ENCODE measurements at regions of chr16 and their contacts with region 1.

Region 1: GRCh38 chr16:12067714-12068401 is 91.3 kb downstream of the SNX29 start:
- DNase-seq: peak; percentile 79
- ATAC-seq: peak; percentile 90
- H3K4me3 ChIP-seq: no peak overlapping the region
- H3K27ac ChIP-seq: no peak overlapping the region
- H3K4me1 ChIP-seq: no peaks in the 10 kb centered on the region
- H3K27me3 ChIP-seq: no peaks in the 10 kb centered on the region
- CTCF ChIP-seq: peak; percentile 93

Region 2: GRCh38 chr16:11949527-11949926 is 118.3 kb before region 1 on chr16:
- CTCF ChIA-PET with region 1: interaction called, 18 read pairs
- POLR2A ChIA-PET with region 1: no interaction called
- in situ Hi-C with region 1: no loop called
- intact Hi-C with region 1: loop called (anchors 5 kb)
- DNase-seq: peak; percentile 38
- ATAC-seq: peak; percentile 95
- H3K4me3 ChIP-seq: no peak overlapping the region
- H3K27ac ChIP-seq: no peak overlapping the region
- H3K4me1 ChIP-seq: 0 out of 2 replicates have a peak, but pooled peaks cover 3% of the 10 kb centered on the region
- H3K27me3 ChIP-seq: no peaks in the 10 kb centered on the region
- CTCF ChIP-seq: peak; percentile 79

Region 3: DNA sequence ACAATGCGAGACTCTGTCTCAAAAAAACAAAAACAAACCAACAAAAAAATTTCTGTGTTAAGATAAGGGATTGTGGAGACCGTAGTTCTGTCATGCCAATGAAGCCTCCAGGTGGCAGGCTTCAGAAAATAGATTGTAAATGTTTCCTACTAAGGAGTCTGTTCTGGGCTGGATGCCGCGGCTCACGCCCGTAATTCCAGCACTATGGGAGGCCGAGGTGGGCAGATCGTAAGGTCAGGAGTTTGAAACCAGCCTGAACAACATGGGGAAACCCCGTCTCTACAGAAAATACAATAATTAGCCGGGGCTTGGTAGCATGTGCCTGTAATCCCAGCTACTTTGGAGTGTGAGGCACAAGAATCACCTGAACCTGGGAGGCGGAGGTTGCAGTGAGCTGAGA is 95.7 kb before region 1 on chr16:
- CTCF ChIA-PET with region 1: interaction called, 5 read pairs
- POLR2A ChIA-PET with region 1: no interaction called
- in situ Hi-C with region 1: no loop called
- intact Hi-C with region 1: loop called (anchors 1 kb)
- DNase-seq: no peak
- ATAC-seq: no peak
- H3K4me3 ChIP-seq: no peak overlapping the region
- H3K27ac ChIP-seq: no peak overlapping the region
- H3K4me1 ChIP-seq: no peaks in the 10 kb centered on the region
- H3K27me3 ChIP-seq: no peaks in the 10 kb centered on the region
- CTCF ChIP-seq: no peak; the same call in 1 of the 2 replicates

Region 4: DNA sequence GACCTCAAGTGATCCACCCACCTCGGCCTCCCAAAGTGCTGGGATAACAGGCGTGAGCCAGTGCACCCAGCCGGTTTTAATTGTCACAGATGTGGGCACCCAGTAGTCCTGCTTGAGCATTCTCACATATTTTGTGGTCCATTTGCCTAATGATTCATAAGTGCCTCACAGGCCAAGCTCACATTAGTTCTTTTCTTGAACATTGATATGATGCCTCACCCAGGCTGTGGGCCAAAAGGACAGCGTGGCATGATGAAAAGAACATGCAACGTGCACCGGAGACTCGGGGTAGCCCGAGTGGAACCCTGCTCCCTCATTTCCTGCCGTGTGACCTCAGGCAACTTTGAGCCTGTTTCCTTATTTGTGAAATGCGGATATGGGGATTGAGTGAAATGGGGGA is 90.6 kb after region 1 on chr16:
- CTCF ChIA-PET with region 1: no interaction called
- POLR2A ChIA-PET with region 1: no interaction called
- in situ Hi-C with region 1: no loop called
- intact Hi-C with region 1: no loop called
- DNase-seq: no peak
- ATAC-seq: no peak
- H3K4me3 ChIP-seq: no peak overlapping the region
- H3K27ac ChIP-seq: no peak overlapping the region
- H3K4me1 ChIP-seq: no peaks in the 10 kb centered on the region
- H3K27me3 ChIP-seq: no peaks in the 10 kb centered on the region
- CTCF ChIP-seq: no peak

Region 5: DNA sequence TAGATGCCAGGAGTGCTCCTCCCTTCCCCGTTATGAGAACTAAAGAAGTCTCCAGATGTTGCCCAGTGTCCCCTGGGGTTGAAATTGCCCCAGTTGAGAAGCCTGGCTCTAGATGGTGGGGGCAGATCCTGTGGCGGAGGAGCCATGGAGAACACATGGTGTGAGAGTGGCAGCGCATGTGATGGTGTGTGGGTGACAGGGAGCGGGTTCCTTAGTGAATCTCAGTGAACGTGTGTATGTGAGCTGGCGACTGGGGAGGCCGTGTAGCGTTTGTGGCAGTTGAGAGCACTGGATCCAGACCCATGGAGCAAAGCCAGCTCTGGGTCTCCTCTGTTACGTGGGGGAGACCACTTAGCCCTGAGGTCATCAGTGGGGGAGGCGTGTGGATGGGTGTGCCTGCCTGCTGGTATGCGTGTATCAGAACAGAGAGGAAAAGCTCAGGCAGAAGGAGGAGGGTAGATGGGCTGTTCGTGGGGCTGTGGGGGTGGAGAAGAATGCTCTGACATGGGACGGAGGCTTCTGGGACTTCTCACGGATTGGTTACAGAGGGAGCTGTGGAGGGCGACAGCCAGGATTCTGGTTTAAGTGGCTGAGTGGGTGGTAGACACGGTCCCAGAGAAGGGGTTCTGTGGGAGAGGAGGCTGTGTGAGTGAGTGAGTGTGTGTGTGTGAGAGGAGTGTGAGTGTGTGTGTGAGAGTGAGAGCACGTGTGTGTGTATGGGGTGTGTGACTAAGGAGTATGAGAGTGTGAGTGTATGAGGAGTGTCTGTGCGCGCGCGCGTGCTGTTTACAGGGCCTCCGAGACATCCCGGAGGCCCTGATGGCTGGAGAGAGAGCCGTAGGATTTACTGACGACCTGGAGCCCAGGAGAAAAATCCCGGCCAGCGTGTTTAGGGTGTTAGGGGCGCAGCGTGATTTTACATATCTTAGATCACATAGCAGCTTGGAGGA is 102.5 kb after region 1 on chr16:
- CTCF ChIA-PET with region 1: no interaction called
- POLR2A ChIA-PET with region 1: no interaction called
- in situ Hi-C with region 1: no loop called
- intact Hi-C with region 1: no loop called
- DNase-seq: no peak
- ATAC-seq: no peak
- H3K4me3 ChIP-seq: no peak overlapping the region
- H3K27ac ChIP-seq: no peak overlapping the region
- H3K4me1 ChIP-seq: no peaks in the 10 kb centered on the region
- H3K27me3 ChIP-seq: no peaks in the 10 kb centered on the region
- CTCF ChIP-seq: no peak

Region 6: GRCh38 chr16:12260647-12261262 is 192.9 kb after region 1 on chr16:
- CTCF ChIA-PET with region 1: no interaction called
- POLR2A ChIA-PET with region 1: no interaction called
- in situ Hi-C with region 1: no loop called
- intact Hi-C with region 1: no loop called
- DNase-seq: no peak
- ATAC-seq: no peak
- H3K4me3 ChIP-seq: no peak overlapping the region
- H3K27ac ChIP-seq: no peak overlapping the region
- H3K4me1 ChIP-seq: no peaks in the 10 kb centered on the region
- H3K27me3 ChIP-seq: no peaks in the 10 kb centered on the region
- CTCF ChIP-seq: no peak

Measured in Panc1 (cell line).